Panc1 (cell line): ENCODE measurements at regions of chr16 and their contacts with region 1.

Region 1: GRCh38 chr16:4892361-4893102 is 44.4 kb downstream of the PPL start:
- DNase-seq: no peak
- ATAC-seq: peak; percentile 5; the same call in 1 of the 2 replicates
- H3K4me3 ChIP-seq: no peak overlapping the region
- H3K27ac ChIP-seq: no peak overlapping the region
- H3K4me1 ChIP-seq: peaks cover 6% of the 10 kb centered on the region
- H3K27me3 ChIP-seq: no peaks in the 10 kb centered on the region
- CTCF ChIP-seq: no peak

Region 2: DNA sequence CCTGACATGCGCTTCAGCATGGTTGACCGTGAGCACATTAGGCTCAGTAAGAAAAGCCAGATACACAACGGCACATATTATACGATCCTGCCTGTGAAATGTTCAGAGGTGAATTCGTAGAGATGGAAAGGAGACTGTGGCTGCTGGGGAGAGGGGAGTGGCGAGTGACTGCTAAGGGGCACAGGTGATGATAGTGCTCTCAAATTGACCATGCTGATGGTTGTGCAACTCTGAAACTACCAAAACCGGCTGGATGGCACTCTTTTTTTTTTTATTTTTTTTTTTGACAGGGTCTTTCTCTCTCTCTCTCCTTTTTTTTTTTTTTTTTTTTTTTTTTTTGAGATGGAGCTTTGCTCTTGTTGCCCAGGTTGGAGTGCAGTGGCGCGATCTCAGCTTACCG is 57.4 kb after region 1 on chr16:
- CTCF ChIA-PET with region 1: no interaction called
- POLR2A ChIA-PET with region 1: interaction called, 14 read pairs
- in situ Hi-C with region 1: no loop called
- intact Hi-C with region 1: loop called (anchors 10 kb)
- DNase-seq: no peak
- ATAC-seq: no peak
- H3K4me3 ChIP-seq: no peak overlapping the region
- H3K27ac ChIP-seq: 0 out of 2 replicates have a peak overlapping the region, but pooled peaks have one; percentile 5
- H3K4me1 ChIP-seq: peaks cover 56% of the 10 kb centered on the region
- H3K27me3 ChIP-seq: no peaks in the 10 kb centered on the region
- CTCF ChIP-seq: no peak